PC-9 (cell line): ENCODE measurements at regions of chr9 and their contacts with region 1.

Region 1: GRCh38 chr9:86034863-86035734 is 64.3 kb downstream of the GOLM1 start:
- DNase-seq: peak in 1 of 2 experiments; percentile 51
- H3K4me3 ChIP-seq: no peak overlapping the region
- H3K27ac ChIP-seq: no peak overlapping the region
- H3K4me1 ChIP-seq: no peaks in the 10 kb centered on the region
- H3K27me3 ChIP-seq: no peaks in the 10 kb centered on the region
- CTCF ChIP-seq: peak; percentile 73

Region 2: DNA sequence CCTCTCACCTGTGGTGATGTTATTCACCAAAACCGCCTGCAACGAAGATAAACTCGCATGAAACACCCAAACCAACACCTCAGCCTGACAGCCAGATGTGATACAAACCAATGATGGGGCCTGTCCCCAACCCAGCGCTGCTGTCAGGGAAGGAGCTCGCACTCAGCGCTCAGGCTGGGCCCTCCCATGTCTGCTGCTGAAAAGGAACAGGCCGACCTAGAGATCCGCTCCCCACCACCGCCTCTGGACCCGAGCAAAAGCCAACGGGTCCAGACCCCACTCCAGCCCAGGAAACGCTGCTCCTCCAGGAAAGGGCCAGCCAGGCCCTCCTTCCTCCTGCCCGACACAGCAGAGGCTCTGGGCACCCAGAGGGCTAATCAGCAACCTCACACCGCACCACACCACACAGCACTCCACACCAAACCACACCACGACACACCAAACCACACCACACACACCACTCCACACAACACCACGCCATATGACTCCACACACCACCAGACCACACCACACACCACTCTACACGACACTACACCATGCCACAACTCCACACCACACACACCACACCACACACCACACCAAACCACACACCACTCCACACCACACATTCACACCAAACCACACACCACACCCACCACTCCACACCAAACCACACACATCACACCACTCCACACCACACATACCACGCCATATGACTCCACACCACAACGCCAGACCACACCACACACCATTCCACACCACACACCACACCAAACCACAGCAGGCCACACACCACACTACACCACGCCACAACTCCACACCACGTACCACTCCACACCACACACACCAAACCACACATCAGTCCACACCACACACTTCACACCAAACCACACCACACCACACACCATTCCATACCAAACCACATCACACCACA is 17.7 kb after region 1 on chr9:
- CTCF ChIA-PET with region 1: no interaction called
- POLR2A ChIA-PET with region 1: no interaction called
- intact Hi-C with region 1: no loop called
- DNase-seq: no peak
- H3K4me3 ChIP-seq: no peak overlapping the region
- H3K27ac ChIP-seq: no peak overlapping the region
- H3K4me1 ChIP-seq: no peaks in the 10 kb centered on the region
- H3K27me3 ChIP-seq: no peaks in the 10 kb centered on the region
- CTCF ChIP-seq: no peak

Region 3: DNA sequence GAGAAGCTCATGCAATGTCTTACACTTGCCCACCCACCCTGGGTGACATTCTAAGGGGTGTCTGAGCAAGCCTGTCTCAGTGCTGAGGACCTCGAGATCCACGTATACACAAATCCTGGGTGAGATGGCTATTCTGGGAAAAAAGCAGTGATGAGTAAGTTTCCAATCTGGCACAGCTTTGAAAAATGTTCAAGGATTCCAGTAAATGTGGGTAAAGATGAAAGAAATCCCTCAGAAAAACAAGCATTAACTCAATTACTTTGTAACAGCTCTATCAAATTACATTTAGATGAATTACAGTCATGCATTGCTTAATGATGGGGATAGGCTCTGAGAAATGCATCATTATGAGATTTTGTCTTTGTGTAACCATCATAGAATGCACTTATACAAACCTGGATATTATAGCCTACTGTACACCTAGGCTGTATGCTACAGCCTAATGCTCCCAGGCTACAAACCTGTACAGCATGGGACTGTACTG is 37.3 kb after region 1 on chr9:
- CTCF ChIA-PET with region 1: interaction called, 10 read pairs
- POLR2A ChIA-PET with region 1: no interaction called
- intact Hi-C with region 1: no loop called
- DNase-seq: no peak
- H3K4me3 ChIP-seq: no peak overlapping the region
- H3K27ac ChIP-seq: no peak overlapping the region
- H3K4me1 ChIP-seq: no peaks in the 10 kb centered on the region
- H3K27me3 ChIP-seq: no peaks in the 10 kb centered on the region
- CTCF ChIP-seq: no peak

Region 4: DNA sequence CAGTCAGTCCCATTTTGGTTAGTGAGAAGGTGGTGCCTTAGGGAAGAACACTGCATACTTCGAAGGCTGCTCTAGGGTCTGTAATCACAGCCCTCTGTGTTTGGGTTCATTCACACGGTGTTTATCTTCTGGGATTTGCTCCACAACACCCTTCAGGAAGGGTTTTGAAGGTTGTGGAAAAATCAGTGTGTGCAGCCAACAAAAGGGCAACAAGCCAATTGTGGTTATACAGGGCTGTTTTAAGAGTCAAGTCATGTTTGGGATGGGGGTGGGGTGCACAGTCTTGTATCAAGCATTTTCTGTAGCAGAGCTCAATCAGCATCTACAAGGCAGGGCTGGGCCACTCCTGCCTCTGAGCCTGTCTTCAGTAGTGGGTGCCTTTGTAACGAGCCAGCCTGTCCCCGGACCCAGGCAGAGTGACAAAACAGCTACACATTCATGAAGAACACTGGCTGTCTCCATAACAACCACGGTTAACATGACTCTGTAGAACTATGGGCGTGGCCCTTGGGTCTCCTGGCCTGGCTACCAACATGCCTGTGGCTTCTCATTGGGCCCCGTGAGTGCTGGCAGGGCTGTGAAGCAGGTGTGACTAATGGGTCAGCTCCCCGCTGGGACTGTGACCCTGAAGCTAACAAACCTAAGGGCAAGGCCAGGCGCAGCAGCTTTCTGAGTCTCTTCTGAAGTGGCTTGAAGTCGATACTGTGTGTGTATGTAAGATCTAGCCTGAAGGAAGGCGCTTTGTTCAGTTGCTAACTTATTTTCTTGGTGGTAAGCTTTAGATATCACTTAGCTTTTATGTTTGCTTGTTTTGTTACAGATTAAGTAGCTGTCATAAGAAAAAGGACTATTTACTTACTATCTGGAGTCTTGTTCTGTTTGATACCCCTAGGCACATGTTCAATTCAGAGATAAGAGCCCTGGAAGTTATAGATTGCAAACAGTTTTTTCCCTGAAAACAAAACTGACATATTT is 92.2 kb after region 1 on chr9:
- CTCF ChIA-PET with region 1: interaction called, 11 read pairs
- POLR2A ChIA-PET with region 1: no interaction called
- intact Hi-C with region 1: no loop called
- DNase-seq: peak; percentile 97 to 99
- H3K4me3 ChIP-seq: peak overlapping the region; percentile 30; the same call in 1 of the 2 replicates
- H3K27ac ChIP-seq: peak overlapping the region; percentile 87
- H3K4me1 ChIP-seq: peaks cover 46% of the 10 kb centered on the region
- H3K27me3 ChIP-seq: no peaks in the 10 kb centered on the region
- CTCF ChIP-seq: no peak

Region 5: GRCh38 chr9:86187121-86187520 is 152.0 kb after region 1 on chr9:
- CTCF ChIA-PET with region 1: no interaction called
- POLR2A ChIA-PET with region 1: no interaction called
- intact Hi-C with region 1: loop called (anchors 1 kb)
- DNase-seq: no peak
- H3K4me3 ChIP-seq: no peak overlapping the region
- H3K27ac ChIP-seq: no peak overlapping the region
- H3K4me1 ChIP-seq: no peaks in the 10 kb centered on the region
- H3K27me3 ChIP-seq: no peaks in the 10 kb centered on the region
- CTCF ChIP-seq: no peak; the same call in 1 of the 2 replicates

Region 6: DNA sequence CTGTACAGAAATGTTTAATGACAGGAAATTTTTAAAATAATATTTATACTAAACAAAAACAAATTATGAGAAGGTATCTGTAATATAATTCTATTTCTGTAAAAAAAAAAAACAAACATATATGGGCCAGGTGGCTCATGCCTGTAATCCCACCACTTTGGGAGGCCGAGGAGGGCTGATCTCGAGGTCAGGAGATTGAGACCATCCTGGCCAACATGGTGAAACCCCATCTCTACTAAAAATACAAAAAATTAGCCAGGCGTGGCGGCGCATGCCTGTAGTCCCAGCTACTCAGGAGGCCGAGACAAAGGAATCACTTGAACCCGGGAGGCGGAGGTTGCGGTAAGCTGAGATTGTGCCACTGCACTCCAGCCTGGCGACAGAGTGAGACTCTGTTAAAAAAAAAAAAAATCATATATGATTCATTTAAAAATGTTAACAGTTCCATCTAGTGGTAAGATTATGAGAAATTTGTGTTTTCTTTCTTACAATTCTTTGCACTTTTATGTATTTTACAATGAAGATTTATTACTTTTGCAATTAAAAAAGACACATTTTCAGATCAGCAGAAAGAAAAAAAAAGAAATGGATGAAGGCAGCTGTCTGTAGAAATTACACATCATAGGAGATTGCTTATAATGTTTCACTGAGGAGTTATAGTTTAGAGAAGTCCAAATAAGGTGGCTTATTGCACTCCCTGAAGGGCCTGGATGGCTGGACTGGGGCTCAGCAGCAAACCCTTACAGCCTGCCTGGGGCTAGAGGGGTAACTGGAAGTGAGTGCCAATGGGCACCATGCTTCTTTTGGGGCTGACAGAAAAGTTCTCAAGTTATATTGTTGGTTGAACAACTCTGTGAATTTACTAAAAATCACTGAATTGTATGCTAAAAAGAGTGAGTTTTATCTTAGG is 204.0 kb after region 1 on chr9:
- CTCF ChIA-PET with region 1: interaction called, 10 read pairs
- POLR2A ChIA-PET with region 1: no interaction called
- intact Hi-C with region 1: loop called (anchors 1 kb)
- DNase-seq: no peak
- H3K4me3 ChIP-seq: no peak overlapping the region
- H3K27ac ChIP-seq: no peak overlapping the region
- H3K4me1 ChIP-seq: no peaks in the 10 kb centered on the region
- H3K27me3 ChIP-seq: no peaks in the 10 kb centered on the region
- CTCF ChIP-seq: peak; percentile 63

Region 7: GRCh38 chr9:86262452-86262851 is 227.4 kb after region 1 on chr9:
- CTCF ChIA-PET with region 1: interaction called, 10 read pairs
- POLR2A ChIA-PET with region 1: no interaction called
- intact Hi-C with region 1: no loop called
- DNase-seq: no peak
- H3K4me3 ChIP-seq: no peak overlapping the region
- H3K27ac ChIP-seq: no peak overlapping the region
- H3K4me1 ChIP-seq: no peaks in the 10 kb centered on the region
- H3K27me3 ChIP-seq: no peaks in the 10 kb centered on the region
- CTCF ChIP-seq: no peak